Activated CD8-positive, alpha-beta memory T cell treated with anti-CD3 and anti-CD28 coated beads, Interleukin-2, amount 10 ng/mL, durations not matched to agents 7 days and 5 days (primary cell): ENCODE measurements at regions of chr2 and their contacts with region 1.

Region 1: DNA sequence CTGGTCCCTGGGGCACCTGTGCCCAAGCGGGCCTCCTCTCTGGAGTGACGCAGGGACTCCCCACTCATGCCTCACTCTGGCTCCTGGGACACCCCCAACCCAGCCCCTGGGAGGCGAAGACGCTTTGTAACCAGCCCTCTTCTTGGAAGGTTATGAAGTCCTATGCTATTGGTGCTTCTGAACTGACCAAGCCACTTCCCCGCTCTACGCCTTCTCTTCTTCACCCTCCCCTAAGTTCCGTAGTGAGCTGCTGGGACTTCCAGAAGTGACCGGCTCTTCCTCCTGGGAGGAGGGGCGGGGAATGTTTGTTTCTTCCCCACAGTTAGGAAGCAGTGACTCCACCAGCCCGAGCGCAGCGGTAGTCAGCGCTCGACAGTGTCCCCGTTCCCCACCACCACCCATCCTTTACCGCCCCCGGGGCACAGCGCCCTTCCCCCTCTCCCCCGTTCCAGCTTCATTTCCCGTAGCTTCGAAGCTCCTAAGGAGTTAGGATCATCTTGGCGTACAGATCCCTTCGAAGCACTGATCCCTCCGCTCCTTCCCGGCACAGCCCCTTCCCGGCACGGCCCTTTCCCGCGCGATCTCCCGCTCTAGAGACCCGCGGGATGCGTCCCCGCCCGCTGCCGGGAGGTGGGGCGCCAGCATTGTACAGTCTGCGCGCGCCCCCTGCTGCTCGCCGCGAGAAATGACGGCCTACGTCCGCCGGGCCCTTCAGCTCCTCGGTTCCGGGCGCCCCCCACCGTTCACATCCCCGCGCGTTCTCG is 25.3 kb upstream of the NOTO start:
- DNase-seq: peak; percentile 90
- ATAC-seq: peak; percentile 92
- H3K4me3 Mint-ChIP-seq: peak overlapping the region; percentile 76
- H3K27ac Mint-ChIP-seq: no peak overlapping the region
- H3K4me1 Mint-ChIP-seq: peaks cover 17% of the 10 kb centered on the region
- H3K27me3 Mint-ChIP-seq: peaks cover 67% of the 10 kb centered on the region

Region 2: DNA sequence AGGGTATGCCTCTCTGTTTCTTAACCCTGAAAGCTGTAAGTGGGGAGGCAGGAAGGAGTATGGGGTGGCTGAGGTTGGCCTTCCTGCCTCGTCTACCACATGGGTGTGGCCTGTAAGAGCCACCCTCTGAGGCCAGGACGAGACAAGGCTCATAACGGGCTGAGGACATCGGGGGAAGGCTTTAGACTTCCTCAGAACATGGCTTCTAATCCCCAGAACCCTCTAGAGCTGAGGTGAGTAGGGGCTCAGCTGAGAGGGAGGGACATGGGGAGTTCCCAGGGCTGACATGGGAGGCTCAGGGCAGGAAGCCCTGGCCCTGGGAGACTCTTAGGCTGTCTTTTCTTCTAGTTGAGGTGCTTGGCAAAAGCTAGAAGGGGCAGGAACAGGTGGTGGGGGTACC is 223.1 kb before region 1 on chr2:
- CTCF ChIA-PET with region 1: interaction called, 13 read pairs
- DNase-seq: peak; percentile 87
- ATAC-seq: peak; percentile 98
- H3K4me3 Mint-ChIP-seq: peak overlapping the region; percentile 86
- H3K27ac Mint-ChIP-seq: peak overlapping the region; percentile 90
- H3K4me1 Mint-ChIP-seq: peaks cover 28% of the 10 kb centered on the region
- H3K27me3 Mint-ChIP-seq: no peaks in the 10 kb centered on the region

Region 3: DNA sequence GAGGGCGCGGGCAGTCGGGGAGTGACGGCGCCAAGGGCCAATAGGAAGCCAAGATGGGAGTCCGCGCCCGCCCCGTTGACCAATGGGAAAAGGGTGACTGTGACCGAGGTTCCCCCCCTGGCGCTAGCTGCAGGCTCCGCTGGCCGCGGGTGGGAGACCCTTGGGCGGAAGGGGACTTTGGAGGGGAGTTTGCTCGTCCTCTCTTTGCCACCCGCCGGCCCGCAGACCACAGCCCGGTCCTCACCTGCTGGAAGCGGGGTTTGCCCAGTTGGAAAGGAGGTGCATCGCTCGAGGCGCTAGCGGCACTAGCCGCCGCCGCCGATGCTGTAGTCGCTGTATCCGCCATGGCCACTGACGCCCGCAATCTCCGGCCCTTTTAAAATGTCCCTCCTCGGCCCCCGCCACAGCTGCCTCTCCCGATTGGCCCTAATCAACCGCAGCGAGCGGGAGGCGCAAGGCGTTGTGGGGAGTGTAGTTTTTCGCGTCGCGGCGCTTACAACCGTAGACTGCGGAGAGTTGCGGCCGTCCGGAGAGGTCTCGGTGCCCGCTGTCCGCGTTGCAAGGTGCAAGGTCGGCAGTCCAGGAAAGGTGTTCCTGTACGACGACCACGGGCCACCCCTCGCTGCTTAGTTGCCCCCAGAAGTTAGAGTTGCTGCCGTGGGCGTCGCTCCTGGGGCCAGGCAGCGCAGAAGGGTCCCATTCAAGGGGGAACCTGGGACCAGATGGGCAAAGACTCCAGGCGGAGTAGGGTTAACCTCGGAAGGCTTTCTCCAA is 105.5 kb before region 1 on chr2 and contains the start of gene SFXN5:
- CTCF ChIA-PET with region 1: interaction called, 10 read pairs
- DNase-seq: peak; percentile 96
- ATAC-seq: peak; percentile 92
- H3K4me3 Mint-ChIP-seq: peak within 1 kb of the TSS; percentile 78
- H3K27ac Mint-ChIP-seq: peak within 1 kb of the TSS; percentile 91
- H3K4me1 Mint-ChIP-seq: peaks cover 24% of the 10 kb centered on the region
- H3K27me3 Mint-ChIP-seq: no peaks in the 10 kb centered on the region
- total RNA-seq, gene SFXN5: 12.4 to 20.0 TPM

Region 4: DNA sequence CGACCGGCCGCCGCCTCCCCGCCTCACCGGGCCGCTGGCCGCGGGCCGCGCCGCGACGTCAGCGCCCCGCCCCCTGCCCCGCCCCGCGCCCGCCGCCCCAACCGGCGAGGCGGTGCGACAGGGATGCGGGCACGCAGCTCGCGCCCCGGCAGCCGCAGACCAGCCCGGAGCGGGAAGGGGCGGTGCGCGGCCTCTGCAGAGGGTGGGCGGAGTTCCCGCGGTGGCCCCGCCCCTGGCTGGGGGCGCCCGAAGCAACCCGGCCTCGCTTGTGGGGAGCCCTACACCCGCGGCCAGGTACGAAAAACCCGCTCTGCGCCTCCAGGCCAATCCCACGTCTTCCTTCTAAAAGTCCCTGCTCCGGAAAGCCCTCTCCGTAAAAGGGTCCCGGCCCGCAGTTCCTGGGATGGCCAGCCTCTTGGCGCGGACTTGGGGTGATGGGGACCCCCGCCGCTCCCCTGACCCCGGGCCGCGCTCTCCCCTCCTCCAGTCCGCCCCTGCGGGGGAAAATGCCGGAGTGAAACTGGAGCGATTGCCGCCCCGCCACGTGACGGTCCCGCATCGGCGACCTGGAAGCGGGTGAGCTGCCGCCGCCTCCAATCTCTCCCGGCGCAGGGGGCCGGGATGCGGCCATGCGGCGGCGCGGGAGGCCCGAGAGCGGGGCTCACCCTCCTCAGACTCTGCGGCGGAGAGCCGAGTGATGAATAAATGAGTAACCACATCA is 64.0 kb before region 1 on chr2 and contains the start of gene RAB11FIP5:
- CTCF ChIA-PET with region 1: interaction called, 21 read pairs
- DNase-seq: peak; percentile 68
- ATAC-seq: peak; percentile 89
- H3K4me3 Mint-ChIP-seq: peak within 1 kb of the TSS; percentile 66
- H3K27ac Mint-ChIP-seq: no peak within 1 kb of the TSS
- H3K4me1 Mint-ChIP-seq: peaks cover 11% of the 10 kb centered on the region
- H3K27me3 Mint-ChIP-seq: peaks cover 37% of the 10 kb centered on the region
- total RNA-seq, gene RAB11FIP5: 1.1 to 2.9 TPM

Region 5: DNA sequence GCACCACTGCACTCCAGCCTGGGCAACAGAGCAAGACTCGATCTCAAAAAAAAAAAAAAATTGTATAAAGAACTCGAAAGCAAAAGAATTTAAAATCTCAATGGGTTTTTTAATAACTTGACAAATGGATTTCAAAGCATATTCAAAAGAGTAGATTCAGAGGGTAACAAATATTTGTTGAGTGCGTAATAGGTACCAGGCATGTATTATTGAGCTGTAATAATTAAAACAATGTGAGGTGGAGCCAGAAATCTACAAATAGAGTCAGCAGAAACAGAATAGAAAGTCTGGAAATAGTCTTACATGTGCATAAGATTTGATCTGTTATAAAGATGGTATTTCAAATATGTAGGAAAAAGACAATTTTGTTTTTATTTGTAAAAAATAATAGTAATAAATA is 45.3 kb before region 1 on chr2:
- CTCF ChIA-PET with region 1: no interaction called
- DNase-seq: no peak
- ATAC-seq: no peak
- H3K4me3 Mint-ChIP-seq: no peak overlapping the region
- H3K27ac Mint-ChIP-seq: no peak overlapping the region
- H3K4me1 Mint-ChIP-seq: no peaks in the 10 kb centered on the region
- H3K27me3 Mint-ChIP-seq: peaks cover 12% of the 10 kb centered on the region

Region 6: GRCh38 chr2:73202156-73203054 is 25.3 kb after region 1 on chr2 and contains the start of gene NOTO:
- CTCF ChIA-PET with region 1: interaction called, 17 read pairs
- DNase-seq: no peak
- ATAC-seq: peak; percentile 61
- H3K4me3 Mint-ChIP-seq: no peak within 1 kb of the TSS
- H3K27ac Mint-ChIP-seq: no peak within 1 kb of the TSS
- H3K4me1 Mint-ChIP-seq: peaks cover 2% of the 10 kb centered on the region
- H3K27me3 Mint-ChIP-seq: peaks cover 66% of the 10 kb centered on the region
- total RNA-seq, gene NOTO: not detected